ENCODE measurements at regions of chr10 and their contacts with region 1.

Region 1: DNA sequence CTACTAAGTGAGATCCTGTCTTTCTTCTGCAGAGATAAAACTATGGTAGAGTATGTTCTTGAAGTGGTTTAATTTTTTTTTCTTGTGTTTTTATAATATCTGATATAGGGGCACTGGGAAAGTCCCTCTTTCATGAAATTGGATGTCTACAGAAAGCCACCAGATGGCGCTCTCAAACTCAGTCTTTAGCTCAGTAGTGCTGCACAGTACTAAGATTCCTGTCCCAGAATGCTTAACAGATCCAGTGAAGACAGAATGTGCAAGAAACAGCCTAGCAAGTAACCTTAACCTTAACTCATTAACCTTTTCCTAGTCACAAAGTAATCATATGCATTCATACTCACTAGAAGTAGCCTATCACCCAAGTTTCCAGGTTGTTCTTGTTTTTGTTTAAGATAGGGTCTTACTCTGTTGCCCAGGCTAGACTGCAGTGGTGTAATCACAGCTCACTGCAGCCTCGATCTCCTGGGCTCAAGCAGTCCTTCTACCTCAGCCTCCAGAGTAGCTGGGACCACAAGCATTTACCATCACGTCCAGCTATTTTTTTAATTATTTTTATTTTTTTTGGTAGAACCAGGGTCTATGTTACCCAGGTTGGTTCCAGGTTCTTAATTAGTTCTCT is 56.7 kb downstream of the IDE start:
- DNase-seq: peak in 1 of 3 donors; percentile 30
- ATAC-seq: peak; percentile 73 to 88
- H3K4me3 ChIP-seq: no peak overlapping the region
- H3K27ac ChIP-seq: no peak overlapping the region
- H3K4me1 ChIP-seq: no peaks in the 10 kb centered on the region
- H3K27me3 ChIP-seq: no peaks in the 10 kb centered on the region

Region 2: DNA sequence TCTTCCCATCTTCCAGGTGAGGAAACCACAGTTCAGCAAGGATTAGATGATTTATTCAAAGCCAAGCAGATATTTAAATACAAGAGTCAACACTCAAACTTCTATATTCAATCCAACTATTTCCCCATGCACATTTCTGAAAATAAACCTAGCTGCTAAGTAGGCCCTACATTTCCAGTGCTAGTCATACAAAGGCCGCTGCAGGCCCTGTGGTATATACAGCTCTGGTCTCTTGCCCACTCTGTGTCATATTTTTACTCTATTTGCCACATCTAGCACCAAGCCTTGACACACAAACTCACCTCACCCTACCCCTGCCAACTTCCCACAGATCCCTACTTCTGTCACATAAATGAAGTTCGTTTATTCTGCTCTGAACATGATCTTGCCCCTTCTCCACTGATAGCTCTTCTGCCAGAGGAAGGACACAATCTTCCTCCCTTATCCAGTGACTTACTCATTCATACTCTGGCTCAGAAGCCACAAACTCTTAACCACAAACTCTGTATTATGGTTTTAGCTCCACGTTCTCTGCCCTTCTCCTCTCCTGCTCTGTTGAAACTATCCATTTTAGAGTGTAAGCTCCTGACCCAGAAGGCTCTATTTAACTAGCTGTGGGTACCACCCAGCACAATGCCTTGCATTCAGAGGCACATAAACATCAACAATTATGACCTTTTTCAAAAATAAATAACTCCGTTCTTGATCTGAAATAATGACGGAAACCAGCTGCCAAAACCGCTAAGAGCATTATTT is 406.9 kb before region 1 on chr10:
- intact Hi-C with region 1: no loop called
- DNase-seq: no peak
- ATAC-seq: no peak
- H3K4me3 ChIP-seq: no peak overlapping the region
- H3K27ac ChIP-seq: no peak overlapping the region
- H3K4me1 ChIP-seq: peaks cover 12% of the 10 kb centered on the region
- H3K27me3 ChIP-seq: no peaks in the 10 kb centered on the region

Region 3: DNA sequence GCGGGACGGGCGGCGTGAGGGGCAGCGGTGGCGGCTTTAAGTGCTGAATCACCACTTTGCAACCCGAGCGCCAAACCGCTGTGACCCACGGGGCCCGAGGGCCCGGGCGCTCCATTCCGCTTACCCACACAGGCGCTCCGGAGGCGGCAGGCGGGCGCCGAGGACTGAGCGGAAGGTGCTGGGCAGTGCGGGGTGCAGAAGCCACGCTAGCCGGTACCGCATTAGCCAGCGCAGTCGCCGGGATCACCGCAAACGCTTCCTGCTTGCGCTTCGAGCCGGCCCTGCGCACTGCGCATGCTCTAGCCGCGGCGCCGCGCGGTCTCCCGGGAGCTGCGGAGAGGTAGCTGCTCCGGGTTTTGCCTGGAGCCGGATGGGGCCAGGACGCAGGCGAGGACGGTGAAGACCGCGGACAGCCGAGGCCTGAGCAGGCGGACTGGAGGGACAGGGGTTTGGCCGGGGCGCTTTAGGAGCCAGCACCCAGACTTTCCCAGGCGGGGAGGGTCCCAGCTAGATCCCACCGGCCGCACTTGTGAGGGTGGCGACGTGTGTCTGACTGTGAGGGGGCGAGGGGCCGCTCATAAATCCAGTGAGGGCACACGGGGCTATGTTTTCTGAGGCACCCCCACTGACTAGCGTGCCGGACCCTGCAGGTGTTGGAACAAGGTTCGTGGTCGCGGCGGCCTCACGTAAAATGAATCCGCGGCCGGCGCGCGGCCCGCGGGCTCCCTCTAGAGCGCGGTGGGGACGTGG is 56.8 kb after region 1 on chr10 and contains the start of gene IDE:
- intact Hi-C with region 1: loop called (anchors 2 to 5 kb)
- DNase-seq: peak; percentile 88 to 95 (median 94)
- ATAC-seq: peak; percentile 95 to 97
- H3K4me3 ChIP-seq: peak within 1 kb of the TSS; percentile 97
- H3K27ac ChIP-seq: peak within 1 kb of the TSS; percentile 91
- H3K4me1 ChIP-seq: peaks cover 5% of the 10 kb centered on the region
- H3K27me3 ChIP-seq: no peaks in the 10 kb centered on the region
- total RNA-seq, gene IDE: 39.7 to 54.1 (median 49.7) TPM

Region 4: GRCh38 chr10:92644921-92645320 is 127.8 kb after region 1 on chr10:
- intact Hi-C with region 1: no loop called
- DNase-seq: no peak
- ATAC-seq: no peak
- H3K4me3 ChIP-seq: no peak overlapping the region
- H3K27ac ChIP-seq: no peak overlapping the region
- H3K4me1 ChIP-seq: no peaks in the 10 kb centered on the region
- H3K27me3 ChIP-seq: no peaks in the 10 kb centered on the region

Region 5: GRCh38 chr10:92873029-92873428 is 355.9 kb after region 1 on chr10:
- intact Hi-C with region 1: loop called in 1 of 4 experiments (anchors 10 kb)
- DNase-seq: no peak
- ATAC-seq: no peak
- H3K4me3 ChIP-seq: no peak overlapping the region
- H3K27ac ChIP-seq: no peak overlapping the region
- H3K4me1 ChIP-seq: peaks cover under 1% of the 10 kb centered on the region
- H3K27me3 ChIP-seq: no peaks in the 10 kb centered on the region